ENCODE measurements at regions of chr13 and their contacts with region 1.

Region 1: GRCh38 chr13:110421696-110422385 is 114.8 kb downstream of the COL4A2 start:
- DNase-seq: peak; percentile 31
- ATAC-seq: peak; percentile 79
- H3K4me3 Mint-ChIP-seq: no peak overlapping the region
- H3K27ac Mint-ChIP-seq: no peak overlapping the region
- H3K4me1 Mint-ChIP-seq: peaks cover 21% of the 10 kb centered on the region
- H3K27me3 Mint-ChIP-seq: peaks cover 84% of the 10 kb centered on the region

Region 2: DNA sequence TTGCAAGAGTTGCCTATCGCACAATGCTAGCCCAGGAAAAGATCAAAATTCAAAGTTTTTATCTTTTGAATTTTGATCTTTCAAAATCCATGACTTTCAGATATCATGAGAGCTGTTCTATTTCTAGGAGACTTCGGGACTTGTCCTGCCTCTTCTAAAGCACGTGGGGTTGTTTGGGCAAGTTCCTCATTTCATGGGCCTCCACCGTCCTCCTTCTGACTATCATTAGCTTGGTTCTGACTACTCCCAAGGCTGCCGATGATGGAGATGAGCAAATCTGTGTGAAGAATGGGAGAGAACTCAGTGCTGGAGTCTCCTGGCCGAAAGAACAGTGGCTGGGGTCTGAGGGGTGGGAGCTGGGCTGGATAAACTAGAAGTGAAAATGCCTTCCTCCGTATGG is 201.4 kb before region 1 on chr13:
- CTCF ChIA-PET with region 1: interaction called, 11 read pairs
- POLR2A ChIA-PET with region 1: no interaction called
- intact Hi-C with region 1: no loop called
- DNase-seq: no peak
- ATAC-seq: no peak
- H3K4me3 Mint-ChIP-seq: no peak overlapping the region
- H3K27ac Mint-ChIP-seq: no peak overlapping the region
- H3K4me1 Mint-ChIP-seq: no peaks in the 10 kb centered on the region
- H3K27me3 Mint-ChIP-seq: peaks cover 32% of the 10 kb centered on the region

Region 3: GRCh38 chr13:110306960-110307746 is 114.7 kb before region 1 on chr13 and contains the starts of genes COL4A1 and COL4A2:
- CTCF ChIA-PET with region 1: no interaction called
- POLR2A ChIA-PET with region 1: no interaction called
- intact Hi-C with region 1: loop called in 1 of 2 experiments (anchors 5 kb)
- DNase-seq: no peak
- ATAC-seq: no peak
- H3K4me3 Mint-ChIP-seq: peak within 1 kb of the TSS; percentile 13
- H3K27ac Mint-ChIP-seq: no peak within 1 kb of the TSS
- H3K4me1 Mint-ChIP-seq: peaks cover 14% of the 10 kb centered on the region
- H3K27me3 Mint-ChIP-seq: peaks cover 65% of the 10 kb centered on the region
- total RNA-seq, gene COL4A1: 0.14 TPM in 1 of 2 experiments, not detected in the other
- total RNA-seq, gene COL4A2: not detected

Region 4: GRCh38 chr13:110319774-110320509 is 101.9 kb before region 1 on chr13:
- CTCF ChIA-PET with region 1: no interaction called
- POLR2A ChIA-PET with region 1: no interaction called
- intact Hi-C with region 1: loop called in 1 of 2 experiments (anchors 2 kb)
- DNase-seq: peak; percentile 83
- ATAC-seq: peak; percentile 79
- H3K4me3 Mint-ChIP-seq: no peak overlapping the region
- H3K27ac Mint-ChIP-seq: no peak overlapping the region
- H3K4me1 Mint-ChIP-seq: peaks cover 14% of the 10 kb centered on the region
- H3K27me3 Mint-ChIP-seq: peaks cover 38% of the 10 kb centered on the region

Region 5: DNA sequence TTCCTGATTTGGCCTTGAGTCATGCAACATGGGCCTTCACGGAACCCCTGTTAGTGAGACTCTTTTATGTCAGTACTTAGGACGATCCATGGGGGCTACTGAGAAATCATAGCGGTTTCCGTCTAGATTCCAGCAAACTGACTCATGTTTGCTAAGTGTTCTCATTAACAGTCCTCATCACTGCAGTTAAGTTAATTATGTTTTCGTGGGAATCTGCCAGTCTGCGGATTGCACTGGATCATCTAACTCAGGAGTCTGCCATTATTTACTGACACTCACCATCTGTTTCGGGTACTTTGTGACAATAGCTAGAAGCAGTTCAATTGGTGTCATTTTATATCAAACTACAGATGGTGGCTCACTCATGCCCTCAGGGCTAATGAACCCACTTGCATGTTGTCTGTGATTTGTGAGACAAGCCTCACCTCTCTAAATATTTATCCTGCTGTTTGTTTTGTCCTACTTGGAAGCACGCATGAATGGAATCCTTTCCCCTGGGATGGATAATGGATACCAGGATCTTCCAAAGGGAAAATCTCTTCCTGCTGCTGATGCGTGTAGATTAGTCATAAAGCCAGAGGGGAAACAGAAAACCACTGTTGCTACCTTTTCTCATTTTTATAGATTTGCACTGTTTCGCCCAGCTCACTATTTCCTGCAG is 77.9 kb after region 1 on chr13:
- CTCF ChIA-PET with region 1: no interaction called
- POLR2A ChIA-PET with region 1: no interaction called
- intact Hi-C with region 1: no loop called
- DNase-seq: no peak
- ATAC-seq: no peak
- H3K4me3 Mint-ChIP-seq: no peak overlapping the region
- H3K27ac Mint-ChIP-seq: no peak overlapping the region
- H3K4me1 Mint-ChIP-seq: no peaks in the 10 kb centered on the region
- H3K27me3 Mint-ChIP-seq: peaks cover 11% of the 10 kb centered on the region

Measured in activated CD4-positive, alpha-beta T cell treated with anti-CD3 and anti-CD28 coated beads for 36 hours (primary cell).